Activated naive CD4-positive, alpha-beta T cell treated with anti-CD3 and anti-CD28 coated beads for 36 hours (primary cell): ENCODE measurements at regions of chr22 and their contacts with region 1.

Region 1: GRCh38 chr22:24156913-24157821 is 24.1 kb upstream of the SUSD2 start:
- DNase-seq: peak; percentile 92
- H3K4me3 Mint-ChIP-seq: peak overlapping the region; percentile 73
- H3K27ac Mint-ChIP-seq: peak overlapping the region; percentile 26
- H3K4me1 Mint-ChIP-seq: peaks cover 72% of the 10 kb centered on the region
- H3K27me3 Mint-ChIP-seq: no peaks in the 10 kb centered on the region

Region 2: GRCh38 chr22:24106385-24107381 is 50.5 kb before region 1 on chr22:
- CTCF ChIA-PET with region 1: interaction called, 4 read pairs
- intact Hi-C with region 1: loop called (anchors 1 kb)
- DNase-seq: peak; percentile 27
- H3K4me3 Mint-ChIP-seq: no peak overlapping the region
- H3K27ac Mint-ChIP-seq: peak overlapping the region; percentile 60
- H3K4me1 Mint-ChIP-seq: peaks cover 28% of the 10 kb centered on the region
- H3K27me3 Mint-ChIP-seq: no peaks in the 10 kb centered on the region

Region 3: GRCh38 chr22:24189249-24190158 is 32.3 kb after region 1 on chr22:
- CTCF ChIA-PET with region 1: no interaction called
- intact Hi-C with region 1: no loop called
- DNase-seq: peak; percentile 64
- H3K4me3 Mint-ChIP-seq: no peak overlapping the region
- H3K27ac Mint-ChIP-seq: no peak overlapping the region
- H3K4me1 Mint-ChIP-seq: no peaks in the 10 kb centered on the region
- H3K27me3 Mint-ChIP-seq: no peaks in the 10 kb centered on the region